ENCODE measurements at regions of chr17 and their contacts with region 1.

Region 1: DNA sequence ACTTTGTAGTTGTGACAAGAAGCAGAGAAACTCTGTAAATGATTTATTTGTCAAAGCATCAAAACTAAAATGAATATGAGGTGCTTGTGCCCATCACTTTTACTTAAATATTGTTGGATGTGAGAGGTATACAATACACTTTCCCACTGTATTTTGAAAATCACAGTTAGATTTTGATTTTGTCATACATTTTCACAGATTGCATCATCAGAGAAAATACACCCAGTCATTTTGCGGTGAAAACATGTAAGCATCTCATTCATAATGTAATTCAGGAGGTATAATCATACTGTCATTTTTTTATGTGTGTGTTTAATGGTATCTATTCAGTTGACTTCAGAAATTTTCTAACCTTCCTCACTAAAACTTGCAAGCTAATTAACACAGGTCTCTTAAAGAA is 11.3 kb downstream of the ZNF207 start:
- DNase-seq: no peak
- ATAC-seq: no peak
- H3K4me3 Mint-ChIP-seq: no peak overlapping the region
- H3K27ac Mint-ChIP-seq: no peak overlapping the region
- H3K4me1 Mint-ChIP-seq: peaks cover 9 to 62% (median 42%) of the 10 kb centered on the region in 4 donors
- H3K27me3 Mint-ChIP-seq: no peaks in the 10 kb centered on the region

Region 2: GRCh38 chr17:32259586-32259985 is 101.7 kb before region 1 on chr17:
- POLR2A ChIA-PET with region 1: interaction called, 10 read pairs
- DNase-seq: no peak
- ATAC-seq: no peak
- H3K4me3 Mint-ChIP-seq: no peak overlapping the region
- H3K27ac Mint-ChIP-seq: no peak overlapping the region
- H3K4me1 Mint-ChIP-seq: peaks cover 0 to 2% (median under 1%) of the 10 kb centered on the region in 4 donors
- H3K27me3 Mint-ChIP-seq: peaks cover 7 to 64% (median 31%) of the 10 kb centered on the region in 5 donors

Measured in naive thymus-derived CD8-positive, alpha-beta T cell (primary cell).